CD4-positive, alpha-beta memory T cell (primary cell): ENCODE measurements at regions of chr10 and their contacts with region 1.

Region 1: GRCh38 chr10:100433253-100434240 is 29.3 kb upstream of the WNT8B start:
- DNase-seq: peak; percentile 87 to 93 (median 90)
- H3K4me3 ChIP-seq: no peak overlapping the region
- H3K4me3 Mint-ChIP-seq: peak overlapping the region in 1 of 8 donors; percentile 4
- H3K27ac ChIP-seq: no peak overlapping the region
- H3K27ac Mint-ChIP-seq: peak overlapping the region in 2 of 7 donors; percentile 11 to 14
- H3K4me1 ChIP-seq: no peaks in the 10 kb centered on the region
- H3K4me1 Mint-ChIP-seq: peaks cover 0 to 3% (median 1%) of the 10 kb centered on the region in 4 donors
- H3K27me3 ChIP-seq: no peaks in the 10 kb centered on the region
- H3K27me3 Mint-ChIP-seq: peaks cover 2% of the 10 kb centered on the region in 2 donors

Region 2: DNA sequence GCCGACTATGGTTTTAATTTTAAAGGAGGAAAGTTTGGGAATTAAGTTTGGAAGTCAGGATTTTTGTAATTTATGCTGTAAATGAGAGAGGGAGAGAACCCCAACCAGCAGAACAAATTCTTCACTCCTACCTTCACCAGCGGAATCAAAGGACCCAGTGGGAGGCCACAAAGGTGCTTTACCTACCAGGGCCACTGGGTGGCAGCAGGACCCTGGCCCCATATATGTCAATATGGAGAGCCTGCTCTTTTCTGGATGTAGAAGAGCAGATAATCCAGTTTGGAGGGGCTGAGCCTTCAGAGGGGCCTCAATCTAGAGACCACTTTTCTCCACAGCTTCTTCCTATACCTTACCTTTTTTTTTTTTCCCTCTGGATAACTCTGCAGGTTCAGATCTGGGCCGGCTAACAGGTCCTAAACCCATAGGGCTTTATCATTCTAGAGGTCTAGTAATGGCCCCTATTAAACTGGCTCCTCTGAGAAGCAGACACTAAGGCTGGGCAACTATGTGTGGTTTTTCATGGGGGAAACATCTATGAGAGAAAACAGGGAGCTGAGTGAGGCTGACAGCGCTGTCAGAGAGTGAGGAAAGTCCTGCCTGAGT is 95.0 kb before region 1 on chr10:
- CTCF ChIA-PET with region 1: interaction called, 202 read pairs
- POLR2A ChIA-PET with region 1: no interaction called
- intact Hi-C with region 1: loop called (anchors 1 kb)
- DNase-seq: peak; percentile 68 to 74 (median 69)
- H3K4me3 ChIP-seq: no peak overlapping the region
- H3K4me3 Mint-ChIP-seq: no peak overlapping the region
- H3K27ac ChIP-seq: no peak overlapping the region
- H3K27ac Mint-ChIP-seq: peak overlapping the region in 2 of 7 donors; percentile 3 to 35
- H3K4me1 ChIP-seq: no peaks in the 10 kb centered on the region
- H3K4me1 Mint-ChIP-seq: no peaks in the 10 kb centered on the region
- H3K27me3 ChIP-seq: no peaks in the 10 kb centered on the region
- H3K27me3 Mint-ChIP-seq: peaks cover 0 to 2% of the 10 kb centered on the region in 2 donors

Region 3: GRCh38 chr10:100346765-100347567 is 86.6 kb before region 1 on chr10 and contains the start of gene SCD:
- CTCF ChIA-PET with region 1: interaction called, 202 read pairs
- POLR2A ChIA-PET with region 1: no interaction called
- intact Hi-C with region 1: loop called (anchors 1 kb)
- DNase-seq: peak; percentile 70 to 85 (median 71)
- H3K4me3 ChIP-seq: peak within 1 kb of the TSS; percentile 23 to 74
- H3K4me3 Mint-ChIP-seq: peak within 1 kb of the TSS; percentile 79 to 92 (median 89)
- H3K27ac ChIP-seq: no peak within 1 kb of the TSS
- H3K27ac Mint-ChIP-seq: peak within 1 kb of the TSS; percentile 63 to 91 (median 80)
- H3K4me1 ChIP-seq: peaks cover 14% of the 10 kb centered on the region
- H3K4me1 Mint-ChIP-seq: peaks cover 9 to 19% (median 15%) of the 10 kb centered on the region in 4 donors
- H3K27me3 ChIP-seq: no peaks in the 10 kb centered on the region
- H3K27me3 Mint-ChIP-seq: peaks cover 0 to 1% of the 10 kb centered on the region in 2 donors
- total RNA-seq, gene SCD: 0.61 to 1.00 TPM

Region 4: GRCh38 chr10:100621360-100622205 is 188.0 kb after region 1 on chr10:
- CTCF ChIA-PET with region 1: no interaction called
- POLR2A ChIA-PET with region 1: no interaction called
- intact Hi-C with region 1: no loop called
- DNase-seq: peak; percentile 41 to 56 (median 48)
- H3K4me3 ChIP-seq: no peak overlapping the region
- H3K4me3 Mint-ChIP-seq: peak overlapping the region; percentile 62 to 84 (median 78)
- H3K27ac ChIP-seq: no peak overlapping the region
- H3K27ac Mint-ChIP-seq: no peak overlapping the region
- H3K4me1 ChIP-seq: no peaks in the 10 kb centered on the region
- H3K4me1 Mint-ChIP-seq: peaks cover 0 to 6% (median 5%) of the 10 kb centered on the region in 4 donors
- H3K27me3 ChIP-seq: peaks cover 13% of the 10 kb centered on the region
- H3K27me3 Mint-ChIP-seq: peaks cover 40 to 74% of the 10 kb centered on the region in 2 donors